ENCODE measurements at regions of chr14 and their contacts with region 1.

Region 1: GRCh38 chr14:101761032-101761880 is at the start of gene PPP2R5C:
- DNase-seq: peak; percentile 80 to 94 (median 89)
- ATAC-seq: peak; percentile 71 to 73
- H3K4me3 Mint-ChIP-seq: peak within 1 kb of the TSS; percentile 87 to 98 (median 93)
- H3K27ac Mint-ChIP-seq: peak within 1 kb of the TSS; percentile 43 to 96 (median 92)
- H3K4me1 Mint-ChIP-seq: peaks cover 14 to 36% (median 26%) of the 10 kb centered on the region in 4 donors
- H3K27me3 Mint-ChIP-seq: no peaks in the 10 kb centered on the region
- polyA plus RNA-seq, gene PPP2R5C: 143 to 237 (median 172) TPM

Region 2: GRCh38 chr14:101721951-101722661 is 39.1 kb before region 1 on chr14:
- POLR2A ChIA-PET with region 1: interaction called, 14 read pairs
- DNase-seq: peak; percentile 46 to 90 (median 84)
- ATAC-seq: peak; percentile 81 to 83
- H3K4me3 Mint-ChIP-seq: peak overlapping the region; percentile 72 to 89 (median 78)
- H3K27ac Mint-ChIP-seq: peak overlapping the region; percentile 89 to 99 (median 98)
- H3K4me1 Mint-ChIP-seq: peaks cover 19 to 64% (median 45%) of the 10 kb centered on the region in 4 donors
- H3K27me3 Mint-ChIP-seq: peaks cover 0 to 2% (median 0%) of the 10 kb centered on the region in 5 donors

Region 3: GRCh38 chr14:101772817-101773216 is 11.6 kb after region 1 on chr14:
- POLR2A ChIA-PET with region 1: interaction called, 14 read pairs
- DNase-seq: no peak
- ATAC-seq: no peak
- H3K4me3 Mint-ChIP-seq: no peak overlapping the region
- H3K27ac Mint-ChIP-seq: peak overlapping the region in 1 of 10 donors; percentile 36
- H3K4me1 Mint-ChIP-seq: peaks cover 12 to 54% (median 30%) of the 10 kb centered on the region in 4 donors
- H3K27me3 Mint-ChIP-seq: no peaks in the 10 kb centered on the region

Measured in naive thymus-derived CD8-positive, alpha-beta T cell (primary cell).